ENCODE measurements at regions of chr12 and their contacts with region 1.

Region 1: DNA sequence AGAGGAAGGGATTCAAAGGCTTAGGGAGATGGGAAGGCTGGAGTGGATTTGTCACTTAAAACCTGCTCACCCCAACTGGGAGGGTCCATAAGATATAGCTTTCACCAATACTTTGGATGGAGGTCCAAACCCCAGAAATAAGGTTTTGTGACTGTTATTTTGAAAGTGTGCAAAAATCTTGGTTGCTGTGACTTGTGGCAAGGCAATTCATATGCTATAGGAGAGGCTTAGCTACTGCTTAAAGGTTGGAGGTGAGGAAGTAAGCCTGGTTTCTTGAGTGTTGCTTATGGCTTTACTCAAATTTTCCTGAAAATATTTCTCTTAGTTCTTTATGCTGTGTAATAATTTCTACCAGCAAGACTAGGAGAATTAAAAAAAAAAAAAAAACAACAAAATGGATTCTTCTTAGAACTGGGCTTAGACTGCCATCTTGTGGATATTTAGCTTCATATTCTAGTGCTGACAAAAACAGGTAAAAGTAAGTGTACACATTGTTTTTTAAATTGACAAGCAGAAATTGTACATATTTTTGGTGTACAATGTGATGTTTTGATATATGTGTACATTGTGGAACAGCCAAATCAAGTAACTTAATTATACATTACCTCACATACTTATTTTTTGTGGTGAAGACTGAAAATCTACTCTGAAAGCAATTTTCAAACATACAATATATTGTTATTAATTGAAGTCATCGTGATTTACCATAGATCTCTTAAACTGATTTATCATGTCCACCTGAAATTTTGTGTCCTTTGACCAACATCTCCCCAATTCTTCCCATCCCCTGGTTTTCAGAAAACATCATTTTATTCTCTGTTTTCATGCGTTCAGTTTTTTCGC is 23.0 kb downstream of the PDE6H start:
- DNase-seq: no peak
- H3K4me3 ChIP-seq: no peak overlapping the region
- H3K27ac ChIP-seq: peak overlapping the region in 1 of 2 donors; percentile 2
- H3K4me1 ChIP-seq: no peaks in the 10 kb centered on the region
- H3K27me3 ChIP-seq: no peaks in the 10 kb centered on the region
- CTCF ChIP-seq: peak in 3 of 4 experiments; percentile 71 to 74 (median 72)
- POLR2A ChIP-seq: no peak

Region 2: GRCh38 chr12:14930299-14930698 is 65.5 kb before region 1 on chr12:
- intact Hi-C with region 1: loop called (anchors 5 kb)
- DNase-seq: no peak
- H3K4me3 ChIP-seq: no peak overlapping the region
- H3K27ac ChIP-seq: no peak overlapping the region
- H3K4me1 ChIP-seq: no peaks in the 10 kb centered on the region
- H3K27me3 ChIP-seq: no peaks in the 10 kb centered on the region
- CTCF ChIP-seq: peak in 2 of 4 experiments; percentile 36 to 50
- POLR2A ChIP-seq: no peak

Region 3: DNA sequence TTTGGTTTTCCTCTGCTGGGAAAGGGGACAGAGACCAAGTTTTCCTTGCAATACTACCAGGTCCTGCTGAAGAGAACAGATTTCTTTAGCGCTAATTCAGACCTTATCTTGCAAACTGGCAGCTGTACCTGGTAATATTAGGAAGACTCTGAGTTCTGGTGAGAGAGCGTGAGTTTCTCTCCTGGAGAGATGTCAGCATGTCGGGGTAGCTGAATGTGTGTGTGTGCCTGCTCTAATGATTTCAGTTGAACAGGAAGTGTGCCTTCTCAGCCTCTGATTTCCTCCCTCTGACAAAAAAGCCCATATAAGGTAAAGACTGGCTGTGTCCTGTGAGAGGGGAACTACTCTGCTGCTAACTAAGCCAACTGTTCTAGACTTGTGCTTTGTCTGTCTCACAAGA is 47.1 kb before region 1 on chr12:
- intact Hi-C with region 1: loop called (anchors 5 kb)
- DNase-seq: no peak
- H3K4me3 ChIP-seq: no peak overlapping the region
- H3K27ac ChIP-seq: peak overlapping the region; percentile 52 to 55
- H3K4me1 ChIP-seq: no peaks in the 10 kb centered on the region
- H3K27me3 ChIP-seq: no peaks in the 10 kb centered on the region
- CTCF ChIP-seq: no peak
- POLR2A ChIP-seq: no peak

Measured in prostate gland (tissue), 2 donors.